ENCODE measurements at regions of chr10 and their contacts with region 1.

Region 1: DNA sequence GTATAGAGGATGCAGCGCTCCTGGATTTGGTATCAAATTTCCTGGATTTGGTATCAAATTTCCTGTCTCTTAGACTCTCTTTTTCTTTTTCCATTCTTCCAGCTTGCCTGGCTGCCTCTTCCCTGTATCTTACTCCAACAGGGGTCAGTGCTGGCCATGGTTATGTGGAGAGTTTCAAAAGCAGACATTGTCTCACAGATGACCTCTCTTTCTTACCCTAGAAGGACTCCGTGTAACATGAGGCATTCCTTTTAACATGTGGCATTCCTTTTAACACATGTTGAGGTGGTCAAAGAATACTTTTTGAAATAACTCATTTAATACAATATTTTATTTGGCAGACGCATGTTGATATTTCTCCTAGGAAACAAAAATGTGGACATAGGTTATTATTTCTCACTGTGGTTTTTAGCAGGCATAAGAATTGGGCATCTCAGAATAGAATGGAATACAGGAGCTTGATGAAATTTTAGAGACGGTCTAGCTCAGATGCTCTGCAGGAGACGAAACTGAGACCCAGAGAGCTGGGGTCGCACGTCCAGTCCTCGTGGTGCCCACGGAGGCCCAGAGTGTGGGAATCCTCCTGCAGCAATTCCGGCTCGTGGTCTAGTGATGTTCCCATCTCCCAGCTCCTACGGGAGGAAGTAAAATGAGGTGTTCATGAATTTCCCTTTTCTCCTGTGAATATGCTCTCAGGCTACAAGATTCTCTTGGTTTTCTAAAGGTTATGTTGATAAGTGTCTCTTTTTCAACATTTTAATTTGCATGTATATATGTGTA is 59.6 kb upstream of the PITRM1 start:
- DNase-seq: no peak
- H3K4me3 ChIP-seq: no peak overlapping the region
- H3K27ac ChIP-seq: no peak overlapping the region
- H3K4me1 ChIP-seq: no peaks in the 10 kb centered on the region
- H3K27me3 ChIP-seq: no peaks in the 10 kb centered on the region
- CTCF ChIP-seq: no peak
- POLR2A ChIP-seq: no peak

Region 2: GRCh38 chr10:3785257-3785850 is 553.2 kb after region 1 on chr10:
- intact Hi-C with region 1: loop called (anchors 5 kb)
- DNase-seq: peak; percentile 99
- H3K4me3 ChIP-seq: peak overlapping the region; percentile 61 to 98 (median 72)
- H3K27ac ChIP-seq: peak overlapping the region; percentile 100
- H3K4me1 ChIP-seq: peaks cover 0 to 5% of the 10 kb centered on the region in 2 donors
- H3K27me3 ChIP-seq: no peaks in the 10 kb centered on the region
- CTCF ChIP-seq: peak in 1 of 3 donors; percentile 27
- POLR2A ChIP-seq: peak; percentile 90

Region 3: DNA sequence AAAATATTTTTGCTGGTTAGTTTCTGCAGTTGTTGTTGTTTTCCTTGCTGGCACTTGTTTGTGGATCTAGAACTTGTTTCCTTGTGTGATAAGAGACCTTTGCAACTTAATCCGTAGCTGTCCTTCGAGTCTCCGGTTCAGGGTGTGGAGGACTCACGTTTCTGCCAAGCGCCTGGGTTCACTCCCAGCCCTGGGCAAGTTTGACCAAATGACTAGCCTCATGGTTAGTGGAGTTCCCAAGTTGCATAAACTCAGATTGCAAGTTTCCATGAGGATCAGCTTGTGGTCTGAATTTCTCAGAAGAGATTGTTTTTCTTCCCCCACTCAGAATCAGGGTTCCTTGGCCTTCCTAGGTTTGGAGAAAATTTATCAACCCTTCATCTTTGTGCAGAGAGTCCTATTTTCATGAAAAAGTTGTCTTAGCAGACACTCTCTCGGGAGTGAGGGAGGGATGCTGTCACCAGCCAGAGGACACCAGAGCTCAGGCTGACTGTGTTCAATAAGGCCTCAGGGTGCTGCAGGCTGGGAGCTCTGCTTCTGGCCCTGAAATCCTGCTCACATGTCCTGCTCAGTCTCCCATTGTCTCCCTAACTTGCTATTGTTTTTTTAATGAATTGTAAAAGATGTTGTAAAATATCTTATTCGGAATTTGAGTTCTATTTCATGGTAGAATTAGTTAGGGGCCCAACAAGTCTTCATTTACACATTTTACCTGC is 930.6 kb after region 1 on chr10:
- intact Hi-C with region 1: loop called (anchors 5 kb)
- DNase-seq: no peak
- H3K4me3 ChIP-seq: no peak overlapping the region
- H3K27ac ChIP-seq: no peak overlapping the region
- H3K4me1 ChIP-seq: no peaks in the 10 kb centered on the region
- H3K27me3 ChIP-seq: no peaks in the 10 kb centered on the region
- CTCF ChIP-seq: no peak
- POLR2A ChIP-seq: no peak

Measured in breast epithelium (tissue), 4 donors.